ENCODE measurements at regions of chr1 and their contacts with region 1.

Region 1: GRCh38 chr1:207499573-207499972 is 3.6 kb downstream of the CR1 start:
- DNase-seq: peak; percentile 87
- H3K4me3 Mint-ChIP-seq: no peak overlapping the region
- H3K27ac Mint-ChIP-seq: peak overlapping the region; percentile 39
- H3K4me1 Mint-ChIP-seq: peaks cover 13% of the 10 kb centered on the region
- H3K27me3 Mint-ChIP-seq: peaks cover 52% of the 10 kb centered on the region

Region 2: GRCh38 chr1:207052911-207053769 is 446.4 kb before region 1 on chr1 and contains the start of gene PFKFB2:
- intact Hi-C with region 1: loop called (anchors 1 kb)
- DNase-seq: peak; percentile 98
- H3K4me3 Mint-ChIP-seq: peak within 1 kb of the TSS; percentile 100
- H3K27ac Mint-ChIP-seq: peak within 1 kb of the TSS; percentile 83
- H3K4me1 Mint-ChIP-seq: peaks cover 36% of the 10 kb centered on the region
- H3K27me3 Mint-ChIP-seq: peaks cover 7% of the 10 kb centered on the region
- total RNA-seq, gene PFKFB2: 2.6 and 3.5 TPM in 2 replicates

Region 3: GRCh38 chr1:207097871-207098324 is 401.7 kb before region 1 on chr1:
- intact Hi-C with region 1: loop called (anchors 1 kb)
- DNase-seq: peak; percentile 75
- H3K4me3 Mint-ChIP-seq: peak overlapping the region; percentile 29
- H3K27ac Mint-ChIP-seq: peak overlapping the region; percentile 86
- H3K4me1 Mint-ChIP-seq: peaks cover 23% of the 10 kb centered on the region
- H3K27me3 Mint-ChIP-seq: peaks cover 9% of the 10 kb centered on the region

Region 4: DNA sequence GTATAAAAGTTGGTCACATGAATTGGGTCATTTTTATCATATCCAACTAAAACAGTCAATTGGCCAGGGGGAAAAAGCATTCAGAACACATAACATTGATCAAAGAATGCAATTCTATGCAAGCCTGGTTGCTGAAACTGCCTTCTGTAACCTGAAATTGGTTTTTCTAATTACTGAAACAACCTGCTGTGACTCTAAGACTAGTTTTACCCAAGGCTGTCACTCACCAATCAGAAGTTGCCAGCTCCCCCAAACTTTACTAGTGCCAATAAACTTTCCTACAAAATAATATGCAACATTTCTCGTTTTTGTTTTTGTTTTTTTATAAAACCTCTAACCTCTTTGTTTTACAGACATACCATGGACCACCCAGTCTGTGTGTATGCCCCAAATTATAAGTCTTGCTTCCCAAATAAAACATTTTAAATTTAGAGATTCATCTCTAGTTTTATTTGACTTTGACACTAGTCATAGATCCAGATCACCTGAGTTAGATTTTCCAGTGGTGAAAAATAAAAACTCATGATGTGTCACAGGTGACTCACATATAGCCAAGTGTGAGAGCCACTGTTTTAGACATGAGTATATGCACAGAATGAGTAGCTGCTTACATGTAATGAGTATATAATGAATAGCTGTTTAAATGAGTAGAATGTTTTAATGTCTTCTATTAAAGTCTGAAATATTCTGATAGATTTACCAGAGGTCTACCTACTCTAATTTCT is 109.7 kb before region 1 on chr1:
- intact Hi-C with region 1: loop called (anchors 1 kb)
- DNase-seq: no peak
- H3K4me3 Mint-ChIP-seq: no peak overlapping the region
- H3K27ac Mint-ChIP-seq: peak overlapping the region; percentile 82
- H3K4me1 Mint-ChIP-seq: peaks cover 8% of the 10 kb centered on the region
- H3K27me3 Mint-ChIP-seq: no peaks in the 10 kb centered on the region

Region 5: DNA sequence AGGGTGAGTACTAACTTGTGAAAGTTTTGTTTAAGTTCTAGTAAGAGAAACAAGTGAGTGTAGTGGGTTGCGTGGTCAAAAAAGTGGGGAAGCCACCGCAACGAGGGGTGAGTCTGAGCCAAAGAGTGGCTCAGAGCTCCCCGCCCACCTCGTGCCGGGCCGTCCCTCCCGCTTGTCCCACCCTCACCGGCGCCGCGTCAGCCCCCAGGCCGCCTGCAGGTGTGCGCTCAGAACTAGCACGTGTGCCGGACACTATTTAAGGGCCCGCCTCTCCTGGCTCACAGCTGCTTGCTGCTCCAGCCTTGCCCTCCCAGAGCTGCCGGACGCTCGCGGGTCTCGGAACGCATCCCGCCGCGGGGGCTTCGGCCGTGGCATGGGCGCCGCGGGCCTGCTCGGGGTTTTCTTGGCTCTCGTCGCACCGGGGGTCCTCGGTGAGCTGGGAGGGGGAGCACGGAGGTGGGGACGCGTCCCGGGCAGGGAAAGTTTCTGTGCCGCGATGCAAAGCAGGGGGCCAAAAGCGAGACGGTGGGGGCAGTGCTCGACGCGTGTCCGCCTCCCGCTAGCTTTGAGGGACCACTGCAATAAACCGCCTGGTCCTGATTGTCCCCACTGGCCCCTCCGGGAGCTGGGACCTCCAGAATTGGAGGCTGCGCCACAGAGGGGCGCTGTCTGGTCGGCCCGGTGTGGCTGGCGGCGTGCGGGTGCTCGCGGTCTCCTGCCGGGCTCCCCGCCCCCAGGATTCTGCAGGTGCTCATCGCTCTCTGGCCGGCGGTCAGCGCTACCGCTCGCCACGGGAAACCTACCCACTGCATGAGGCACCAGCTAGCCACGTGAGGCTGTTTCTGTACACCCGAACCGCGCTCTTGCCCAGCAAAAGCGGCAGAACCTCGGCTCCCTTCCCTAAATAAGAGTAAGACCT is 45.3 kb before region 1 on chr1 and contains the start of gene CR2:
- intact Hi-C with region 1: loop called (anchors 5 kb)
- DNase-seq: peak; percentile 69
- H3K4me3 Mint-ChIP-seq: peak within 1 kb of the TSS; percentile 56
- H3K27ac Mint-ChIP-seq: no peak within 1 kb of the TSS
- H3K4me1 Mint-ChIP-seq: peaks cover 7% of the 10 kb centered on the region
- H3K27me3 Mint-ChIP-seq: peaks cover 49% of the 10 kb centered on the region
- total RNA-seq, gene CR2: 0.24 TPM in 1 of 2 replicates, not detected in the other

Measured in activated CD4-positive, alpha-beta T cell treated with anti-CD3 and anti-CD28 coated beads, Interleukin-2, amount 10 ng/mL, durations not matched to agents 24 days and 14 days (primary cell).